Activated T-helper 2 cell treated with anti-CD3 and anti-CD28 coated beads, Interferon-gamma antibody, Interleukin-2, Interleukin-4, amounts not matched to agents 10 μg/mL and 5 μg/mL and 100 μg/mL, durations not matched to agents 14 hours and 24 hours and 36 hours (primary cell): ENCODE measurements at regions of chr6 and their contacts with region 1.

Region 1: DNA sequence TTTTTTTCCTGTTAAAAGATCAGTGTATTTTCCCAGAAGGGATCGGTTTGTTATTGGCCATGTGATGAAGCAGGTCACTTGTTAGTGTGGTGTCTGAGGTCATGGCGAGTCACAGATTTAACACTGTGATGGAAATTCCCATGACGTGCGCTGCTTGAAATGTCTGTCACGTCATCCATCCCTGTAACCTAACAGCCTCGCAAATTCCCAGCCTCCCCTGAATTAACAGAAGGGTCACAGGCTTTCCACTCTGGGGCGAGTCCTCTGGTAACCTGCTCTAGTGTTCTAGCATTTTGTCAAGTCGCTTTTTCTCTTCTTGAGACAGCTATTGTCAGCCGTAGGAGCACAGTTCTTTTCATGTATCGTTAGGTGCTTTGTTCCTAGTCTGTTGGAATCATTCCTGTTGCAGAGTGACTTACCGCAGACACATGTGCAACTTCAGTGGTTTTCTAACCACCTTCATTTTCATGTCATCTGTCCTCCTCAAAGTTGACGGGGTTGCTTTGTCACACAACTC is 137.2 kb downstream of the MAP3K4 start:
- DNase-seq: no peak
- H3K4me3 Mint-ChIP-seq: peak overlapping the region; percentile 15
- H3K27ac Mint-ChIP-seq: peak overlapping the region; percentile 93
- H3K4me1 Mint-ChIP-seq: peaks cover 20% of the 10 kb centered on the region
- H3K27me3 Mint-ChIP-seq: no peaks in the 10 kb centered on the region

Region 2: GRCh38 chr6:161088676-161089328 is 39.9 kb before region 1 on chr6:
- intact Hi-C with region 1: loop called (anchors 2 kb)
- DNase-seq: no peak
- H3K4me3 Mint-ChIP-seq: no peak overlapping the region
- H3K27ac Mint-ChIP-seq: no peak overlapping the region
- H3K4me1 Mint-ChIP-seq: peaks cover 16% of the 10 kb centered on the region
- H3K27me3 Mint-ChIP-seq: no peaks in the 10 kb centered on the region